GM10248 (cell line): ENCODE measurements at regions of chr9 and their contacts with region 1.

Region 1: DNA sequence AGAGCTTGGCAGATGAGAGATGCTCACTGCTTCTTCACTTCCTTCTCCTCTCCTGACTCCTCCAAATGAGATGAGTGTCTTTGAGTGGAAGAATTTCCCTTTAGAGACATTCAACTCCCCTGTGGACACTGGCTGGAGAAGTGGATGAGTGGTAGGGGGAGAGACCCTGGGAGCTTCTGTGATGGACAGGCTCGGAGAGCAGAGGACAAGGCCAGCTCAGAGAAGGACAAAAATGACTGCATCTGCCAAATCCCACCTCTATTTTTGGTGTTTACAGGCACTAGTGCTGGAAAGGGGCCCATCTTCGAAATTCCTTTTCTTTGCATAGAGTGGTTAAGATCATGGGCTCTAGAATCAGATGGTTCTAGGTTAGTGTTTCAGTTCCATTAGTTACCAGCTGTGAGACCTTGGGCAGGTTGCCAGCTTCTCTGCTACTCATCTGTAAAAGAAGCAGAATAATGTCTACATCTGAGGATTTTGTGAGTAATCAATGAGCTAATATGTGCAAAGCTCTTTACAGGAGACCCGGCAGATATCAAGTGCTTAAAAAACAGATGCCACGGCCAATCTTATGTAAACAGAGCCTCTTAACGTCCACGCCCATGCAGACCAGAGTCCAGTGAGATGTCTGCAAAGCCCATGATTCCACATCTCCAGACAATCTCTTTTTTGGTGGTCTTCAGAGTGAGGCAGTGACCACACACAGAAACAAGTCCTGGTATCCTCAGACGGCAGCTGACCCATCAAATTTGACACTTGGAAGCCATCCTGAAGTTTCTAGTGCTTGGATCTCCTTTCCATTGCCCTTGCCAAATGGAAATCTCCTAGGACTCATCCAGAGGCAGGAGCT is 13.6 kb upstream of the COL27A1 start:
- DNase-seq: no peak
- CTCF ChIP-seq: no peak

Region 2: DNA sequence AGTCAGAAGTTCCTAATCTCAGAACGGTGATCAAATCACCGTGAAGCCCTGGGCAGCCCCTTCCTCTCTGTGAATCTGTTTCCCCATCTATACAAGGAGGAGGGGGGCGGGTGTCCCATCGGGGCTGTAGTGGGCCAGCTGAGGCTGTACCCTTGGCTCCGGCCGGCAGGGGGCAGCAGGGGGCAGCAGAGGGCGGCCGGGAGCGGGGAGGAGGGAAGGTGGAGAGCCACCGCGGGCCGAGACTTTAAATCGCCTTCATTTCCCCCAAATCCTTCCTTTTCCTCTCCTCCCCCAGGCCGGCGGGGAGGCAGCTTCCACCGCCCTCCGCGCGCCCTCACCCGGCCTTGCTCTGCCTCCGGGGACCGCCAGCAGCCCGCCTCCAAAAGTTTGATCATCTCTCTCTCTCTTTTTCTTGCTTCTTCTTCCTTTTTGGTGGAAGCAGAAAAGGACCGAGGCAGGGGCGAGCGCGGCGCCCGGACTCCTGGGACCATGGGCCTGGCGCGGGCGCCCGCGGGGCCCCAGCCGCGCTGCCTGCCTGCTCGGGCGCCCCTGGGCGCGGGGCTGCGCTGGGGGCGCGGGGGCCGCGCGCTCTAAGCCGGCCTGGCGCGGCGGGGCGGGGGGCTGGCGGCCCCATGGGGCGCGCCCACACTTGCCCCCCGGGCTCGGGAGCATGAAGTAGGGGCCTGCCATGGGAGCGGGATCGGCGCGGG is 13.6 kb after region 1 on chr9 and contains the start of gene COL27A1:
- CTCF ChIA-PET with region 1: interaction called, 12 read pairs
- POLR2A ChIA-PET with region 1: interaction called, 3 read pairs
- DNase-seq: peak; percentile 90
- CTCF ChIP-seq: peak; percentile 92